Heart right ventricle (tissue), 16 donors: ENCODE measurements at regions of chr11 and their contacts with region 1.

Region 1: GRCh38 chr11:127640561-127641451 is 640.2 kb upstream of the KIRREL3 start:
- DNase-seq: no peak
- ATAC-seq: no peak
- H3K4me3 ChIP-seq: no peak overlapping the region
- H3K27ac ChIP-seq: no peak overlapping the region
- H3K4me1 ChIP-seq: no peaks in the 10 kb centered on the region
- H3K27me3 ChIP-seq: no peaks in the 10 kb centered on the region
- CTCF ChIP-seq: no peak

Region 2: GRCh38 chr11:127074151-127074761 is 566.5 kb before region 1 on chr11:
- intact Hi-C with region 1: loop called in 1 of 10 experiments (anchors 5 kb)
- DNase-seq: no peak
- ATAC-seq: peak in 2 of 8 donors; percentile 24 to 29
- H3K4me3 ChIP-seq: no peak overlapping the region
- H3K27ac ChIP-seq: no peak overlapping the region
- H3K4me1 ChIP-seq: no peaks in the 10 kb centered on the region
- H3K27me3 ChIP-seq: peaks cover 0 to 18% (median 1%) of the 10 kb centered on the region in 7 donors
- CTCF ChIP-seq: peak in 2 of 9 donors; percentile 8 to 9

Region 3: DNA sequence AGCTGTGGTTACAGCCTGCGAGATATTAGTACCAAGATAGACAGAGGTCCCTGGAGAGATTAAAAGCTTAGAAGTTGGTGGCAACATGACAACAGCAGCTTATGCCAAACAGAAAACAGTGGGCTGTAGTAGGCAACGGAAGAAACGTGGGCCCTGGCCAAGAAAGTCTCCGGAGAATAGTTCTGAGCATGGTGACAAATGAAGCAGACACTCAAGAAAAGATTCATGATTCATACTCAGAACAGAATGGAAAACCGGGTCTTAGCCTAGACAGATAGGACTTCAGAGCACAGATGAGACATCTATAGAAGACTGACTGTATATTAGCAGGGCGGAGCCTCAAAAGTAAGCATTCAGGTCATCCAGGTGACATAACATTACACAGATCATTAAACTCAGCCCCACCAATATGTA is 219.1 kb after region 1 on chr11:
- intact Hi-C with region 1: no loop called
- DNase-seq: peak in 1 of 2 donors; percentile 4
- ATAC-seq: no peak
- H3K4me3 ChIP-seq: no peak overlapping the region
- H3K27ac ChIP-seq: no peak overlapping the region
- H3K4me1 ChIP-seq: no peaks in the 10 kb centered on the region
- H3K27me3 ChIP-seq: no peaks in the 10 kb centered on the region
- CTCF ChIP-seq: no peak

Region 4: GRCh38 chr11:128095466-128095981 is 454.7 kb after region 1 on chr11:
- intact Hi-C with region 1: no loop called
- DNase-seq: peak in 1 of 2 donors; percentile 5
- ATAC-seq: peak in 5 of 8 donors; percentile 58 to 87 (median 75)
- H3K4me3 ChIP-seq: no peak overlapping the region
- H3K27ac ChIP-seq: peak overlapping the region in 1 of 10 donors; percentile 41
- H3K4me1 ChIP-seq: peaks cover 0 to 4% (median 0%) of the 10 kb centered on the region in 9 donors
- H3K27me3 ChIP-seq: no peaks in the 10 kb centered on the region
- CTCF ChIP-seq: peak in 2 of 9 donors; percentile 14 to 15